Activated CD8-positive, alpha-beta T cell treated with anti-CD3 and anti-CD28 coated beads, Interleukin-2, amount 10 ng/mL, durations not matched to agents 7 days and 5 days (primary cell): ENCODE measurements at regions of chr16 and their contacts with region 1.

Region 1: DNA sequence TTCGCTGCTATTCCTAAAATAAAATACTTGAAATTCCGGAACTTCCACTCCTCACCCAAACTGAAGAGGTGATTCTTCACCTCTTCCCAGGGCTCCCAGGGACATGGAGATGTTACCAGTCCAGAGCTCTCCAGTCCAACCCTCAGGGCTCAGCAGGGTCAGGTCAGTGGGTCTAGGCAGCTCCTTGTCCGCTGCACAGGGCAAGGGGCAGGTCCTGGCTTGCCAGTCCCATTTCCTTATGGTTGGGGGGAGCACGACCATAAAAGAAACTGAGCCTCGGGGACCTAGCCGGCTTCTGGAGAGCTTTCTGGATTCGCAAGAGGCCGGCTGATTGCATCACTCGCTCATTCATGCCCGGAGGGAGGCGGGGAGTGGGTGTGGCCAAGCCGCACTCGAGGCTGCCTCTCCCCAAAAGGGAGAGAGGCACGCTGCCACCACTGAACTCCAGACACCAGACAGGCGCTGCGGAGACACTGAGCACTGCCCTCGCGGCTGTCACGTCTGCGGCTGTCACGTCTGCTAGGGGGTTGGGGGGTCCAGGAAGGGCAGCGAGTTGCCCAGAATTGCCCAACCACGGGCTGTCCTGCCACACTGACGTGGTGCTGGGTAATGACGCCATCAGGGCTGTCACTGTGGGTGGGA is 15.8 kb downstream of the SLC7A5 start:
- DNase-seq: peak; percentile 94
- ATAC-seq: peak; percentile 75
- H3K4me3 Mint-ChIP-seq: peak overlapping the region; percentile 68
- H3K27ac Mint-ChIP-seq: peak overlapping the region; percentile 96
- H3K4me1 Mint-ChIP-seq: peaks cover 79% of the 10 kb centered on the region
- H3K27me3 Mint-ChIP-seq: no peaks in the 10 kb centered on the region

Region 2: GRCh38 chr16:87806603-87807546 is 46.7 kb before region 1 on chr16:
- CTCF ChIA-PET with region 1: interaction called, 12 read pairs
- POLR2A ChIA-PET with region 1: no interaction called
- DNase-seq: peak; percentile 67
- ATAC-seq: peak; percentile 83
- H3K4me3 Mint-ChIP-seq: peak overlapping the region; percentile 86
- H3K27ac Mint-ChIP-seq: peak overlapping the region; percentile 98
- H3K4me1 Mint-ChIP-seq: peaks cover 46% of the 10 kb centered on the region
- H3K27me3 Mint-ChIP-seq: peaks cover 5% of the 10 kb centered on the region

Region 3: GRCh38 chr16:87822108-87822970 is 31.2 kb before region 1 on chr16:
- CTCF ChIA-PET with region 1: interaction called, 19 read pairs
- POLR2A ChIA-PET with region 1: no interaction called
- DNase-seq: no peak
- ATAC-seq: no peak
- H3K4me3 Mint-ChIP-seq: no peak overlapping the region
- H3K27ac Mint-ChIP-seq: peak overlapping the region; percentile 60
- H3K4me1 Mint-ChIP-seq: peaks cover 11% of the 10 kb centered on the region
- H3K27me3 Mint-ChIP-seq: no peaks in the 10 kb centered on the region

Region 4: GRCh38 chr16:87877938-87878507 is 24.5 kb after region 1 on chr16:
- CTCF ChIA-PET with region 1: interaction called, 203 read pairs
- POLR2A ChIA-PET with region 1: interaction called, 4 read pairs
- DNase-seq: peak; percentile 62
- ATAC-seq: no peak
- H3K4me3 Mint-ChIP-seq: no peak overlapping the region
- H3K27ac Mint-ChIP-seq: peak overlapping the region; percentile 34
- H3K4me1 Mint-ChIP-seq: peaks cover 34% of the 10 kb centered on the region
- H3K27me3 Mint-ChIP-seq: peaks cover 14% of the 10 kb centered on the region

Region 5: DNA sequence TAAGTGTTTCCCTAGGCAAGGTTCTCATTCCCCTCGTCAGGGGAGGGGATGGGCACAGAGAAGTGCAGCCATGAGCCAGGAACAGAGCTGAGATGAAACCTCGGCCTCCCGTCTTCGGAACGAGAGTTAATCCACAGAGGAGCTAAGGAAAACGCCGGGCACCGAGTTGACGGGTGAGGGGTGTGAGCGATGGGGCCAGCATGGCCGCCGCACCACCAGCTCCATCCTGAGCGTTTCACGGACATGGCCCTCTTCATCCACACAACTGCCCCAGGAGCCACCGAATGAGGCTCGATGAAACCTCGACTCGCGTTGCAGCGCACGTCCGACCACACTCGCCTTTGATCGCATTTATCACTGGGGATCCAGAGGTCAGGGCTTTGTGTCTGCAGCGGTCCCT is 61.3 kb after region 1 on chr16:
- CTCF ChIA-PET with region 1: interaction called, 10 read pairs
- POLR2A ChIA-PET with region 1: no interaction called
- DNase-seq: no peak
- ATAC-seq: no peak
- H3K4me3 Mint-ChIP-seq: no peak overlapping the region
- H3K27ac Mint-ChIP-seq: no peak overlapping the region
- H3K4me1 Mint-ChIP-seq: peaks cover 6% of the 10 kb centered on the region
- H3K27me3 Mint-ChIP-seq: peaks cover 6% of the 10 kb centered on the region